ENCODE measurements at regions of chrX and their contacts with region 1.

Region 1: DNA sequence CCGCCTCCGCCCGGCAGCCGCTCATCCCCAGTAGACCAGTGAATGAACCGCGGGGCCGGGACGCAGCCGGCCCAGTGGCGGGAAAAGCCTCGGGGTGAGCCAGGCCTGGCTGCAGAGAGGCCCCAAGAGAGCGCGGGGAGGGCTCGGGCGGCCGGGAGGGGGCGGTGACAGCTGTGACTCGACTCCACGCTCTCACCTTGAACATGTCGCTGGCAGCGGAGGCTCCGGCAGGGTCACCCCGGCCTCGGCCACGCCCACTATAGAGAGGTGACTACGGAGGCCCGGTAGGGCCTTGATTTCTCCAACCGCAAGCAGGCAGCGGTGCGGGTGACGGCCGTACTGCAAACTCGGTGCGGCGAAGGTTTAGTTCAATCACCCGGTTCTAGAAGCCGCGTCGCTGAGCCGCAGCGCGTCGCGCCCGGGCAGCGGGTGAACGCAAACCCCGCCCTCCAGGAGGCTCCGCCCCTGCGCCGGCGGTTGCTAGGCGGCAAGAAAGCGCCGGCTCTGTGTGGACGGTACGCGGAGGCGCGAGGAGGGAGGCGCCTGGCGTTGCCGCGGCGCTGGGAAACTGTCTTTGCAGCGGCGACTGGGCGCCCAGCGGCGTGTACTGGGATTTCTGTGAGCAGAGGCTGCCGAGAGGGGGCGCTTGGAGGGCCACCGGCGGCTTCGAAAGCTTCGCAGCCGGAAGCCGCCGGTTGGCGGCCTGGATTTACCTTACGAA is at the starts of genes APOO and CXorf58:
- DNase-seq: peak; percentile 84 to 95 (median 90)
- ATAC-seq: peak; percentile 92 to 93
- H3K4me3 Mint-ChIP-seq: peak within 1 kb of the TSS; percentile 78 to 90 (median 84)
- H3K27ac Mint-ChIP-seq: peak within 1 kb of the TSS; percentile 87 to 97 (median 94)
- H3K4me1 Mint-ChIP-seq: peaks cover 6 to 14% (median 10%) of the 10 kb centered on the region in 4 donors
- H3K27me3 Mint-ChIP-seq: no peaks in the 10 kb centered on the region
- polyA plus RNA-seq, gene APOO: 15.9 to 20.2 (median 19.7) TPM
- polyA plus RNA-seq, gene CXorf58: not detected

Region 2: GRCh38 chrX:23782863-23783568 is 124.6 kb before region 1 on chrX and contains the start of gene SAT1:
- POLR2A ChIA-PET with region 1: interaction called, 27 read pairs
- DNase-seq: peak; percentile 83 to 97 (median 92)
- ATAC-seq: peak; percentile 90 to 93
- H3K4me3 Mint-ChIP-seq: peak within 1 kb of the TSS; percentile 90 to 98 (median 95)
- H3K27ac Mint-ChIP-seq: peak within 1 kb of the TSS; percentile 94 to 99 (median 98)
- H3K4me1 Mint-ChIP-seq: peaks cover 13 to 45% (median 29%) of the 10 kb centered on the region in 4 donors
- H3K27me3 Mint-ChIP-seq: no peaks in the 10 kb centered on the region
- polyA plus RNA-seq, gene SAT1: 50.1 to 91.0 (median 83.3) TPM

Region 3: GRCh38 chrX:23952984-23953907 is 45.6 kb after region 1 on chrX:
- POLR2A ChIA-PET with region 1: interaction called, 14 read pairs
- DNase-seq: peak; percentile 2 to 64 (median 21)
- ATAC-seq: peak; percentile 90 to 91
- H3K4me3 Mint-ChIP-seq: peak overlapping the region; percentile 81 to 92 (median 87)
- H3K27ac Mint-ChIP-seq: peak overlapping the region; percentile 86 to 98 (median 92)
- H3K4me1 Mint-ChIP-seq: peaks cover 3 to 30% (median 20%) of the 10 kb centered on the region in 4 donors
- H3K27me3 Mint-ChIP-seq: no peaks in the 10 kb centered on the region

Region 4: GRCh38 chrX:24014388-24015018 is 106.8 kb after region 1 on chrX:
- POLR2A ChIA-PET with region 1: no interaction called
- DNase-seq: peak in 4 of 10 donors; percentile 15 to 44 (median 36)
- ATAC-seq: peak; percentile 81 to 82
- H3K4me3 Mint-ChIP-seq: peak overlapping the region; percentile 62 to 85 (median 78)
- H3K27ac Mint-ChIP-seq: peak overlapping the region; percentile 73 to 98 (median 91)
- H3K4me1 Mint-ChIP-seq: peaks cover 18 to 38% (median 31%) of the 10 kb centered on the region in 4 donors
- H3K27me3 Mint-ChIP-seq: no peaks in the 10 kb centered on the region

Region 5: GRCh38 chrX:24024819-24025740 is 117.4 kb after region 1 on chrX:
- POLR2A ChIA-PET with region 1: interaction called, 18 read pairs
- DNase-seq: peak; percentile 70 to 84 (median 78)
- ATAC-seq: peak; percentile 86 to 88
- H3K4me3 Mint-ChIP-seq: peak overlapping the region; percentile 75 to 94 (median 88)
- H3K27ac Mint-ChIP-seq: peak overlapping the region in 8 of 10 donors; percentile 48 to 91 (median 80)
- H3K4me1 Mint-ChIP-seq: peaks cover 11 to 33% (median 21%) of the 10 kb centered on the region in 4 donors
- H3K27me3 Mint-ChIP-seq: no peaks in the 10 kb centered on the region

Region 6: DNA sequence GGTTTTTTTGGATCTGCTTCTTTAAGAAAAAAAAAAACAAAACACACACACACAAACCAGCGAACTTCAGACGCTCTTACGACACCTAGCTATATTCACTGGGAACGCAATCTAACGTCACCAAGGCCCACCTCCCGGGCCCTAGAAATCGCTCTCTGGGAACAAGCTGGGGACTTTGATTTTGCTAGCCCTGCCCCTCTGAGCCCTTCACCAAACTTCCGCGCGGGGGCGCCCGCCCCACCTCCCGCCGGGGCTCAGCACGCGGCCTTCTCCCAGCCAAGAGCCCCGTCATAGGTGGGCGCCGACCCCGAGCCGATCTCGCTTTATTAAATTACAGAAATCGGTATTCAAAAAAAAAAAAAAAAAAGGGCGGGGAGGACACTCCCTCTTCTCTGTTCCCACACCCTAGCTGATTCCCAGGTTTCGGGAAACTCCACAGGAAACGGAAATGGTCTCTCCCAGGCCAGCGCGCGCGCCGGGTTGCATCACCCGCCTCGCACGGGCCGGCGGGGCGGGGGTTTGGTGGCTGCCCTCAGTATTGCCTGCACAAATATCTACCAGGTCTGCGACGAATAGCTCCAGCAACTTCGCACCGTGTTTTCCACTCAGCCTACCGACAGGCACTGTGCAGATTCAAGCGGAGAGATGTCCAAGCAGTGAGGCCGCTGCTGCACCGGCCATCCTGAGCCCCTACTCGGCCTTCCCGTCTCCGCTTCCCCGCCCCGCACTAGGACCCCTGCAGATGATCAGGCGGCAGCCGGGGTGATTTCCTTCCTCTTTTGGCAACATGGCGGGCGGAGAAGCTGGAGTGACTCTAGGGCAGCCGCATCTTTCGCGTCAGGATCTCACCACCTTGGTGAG is 146.8 kb after region 1 on chrX and contains the start of gene EIF2S3:
- POLR2A ChIA-PET with region 1: interaction called, 30 read pairs
- DNase-seq: peak; percentile 70 to 98 (median 88)
- ATAC-seq: peak; percentile 81 to 86
- H3K4me3 Mint-ChIP-seq: no peak within 1 kb of the TSS
- H3K27ac Mint-ChIP-seq: peak within 1 kb of the TSS in 3 of 10 donors; percentile 99 to 100 (median 99)
- H3K4me1 Mint-ChIP-seq: peaks cover 0 to 11% (median 5%) of the 10 kb centered on the region in 4 donors
- H3K27me3 Mint-ChIP-seq: no peaks in the 10 kb centered on the region
- polyA plus RNA-seq, gene EIF2S3: 123 to 148 (median 141) TPM